ENCODE measurements at regions of chr5 and their contacts with region 1.

Region 1: GRCh38 chr5:61357745-61358144 is 25.7 kb downstream of the ZSWIM6 start:
- DNase-seq: no peak
- ATAC-seq: no peak
- H3K4me3 ChIP-seq: no peak overlapping the region
- H3K27ac ChIP-seq: no peak overlapping the region
- H3K4me1 ChIP-seq: no peaks in the 10 kb centered on the region; the same call in 1 of the 2 replicates
- H3K27me3 ChIP-seq: no peaks in the 10 kb centered on the region
- CTCF ChIP-seq: peak; percentile 39; the same call in 1 of the 2 replicates

Region 2: GRCh38 chr5:60870857-60871256 is 486.9 kb before region 1 on chr5:
- CTCF ChIA-PET with region 1: no interaction called
- POLR2A ChIA-PET with region 1: no interaction called
- in situ Hi-C with region 1: no loop called
- intact Hi-C with region 1: no loop called
- DNase-seq: no peak
- ATAC-seq: no peak
- H3K4me3 ChIP-seq: no peak overlapping the region
- H3K27ac ChIP-seq: no peak overlapping the region
- H3K4me1 ChIP-seq: no peaks in the 10 kb centered on the region
- H3K27me3 ChIP-seq: no peaks in the 10 kb centered on the region
- CTCF ChIP-seq: no peak

Region 3: DNA sequence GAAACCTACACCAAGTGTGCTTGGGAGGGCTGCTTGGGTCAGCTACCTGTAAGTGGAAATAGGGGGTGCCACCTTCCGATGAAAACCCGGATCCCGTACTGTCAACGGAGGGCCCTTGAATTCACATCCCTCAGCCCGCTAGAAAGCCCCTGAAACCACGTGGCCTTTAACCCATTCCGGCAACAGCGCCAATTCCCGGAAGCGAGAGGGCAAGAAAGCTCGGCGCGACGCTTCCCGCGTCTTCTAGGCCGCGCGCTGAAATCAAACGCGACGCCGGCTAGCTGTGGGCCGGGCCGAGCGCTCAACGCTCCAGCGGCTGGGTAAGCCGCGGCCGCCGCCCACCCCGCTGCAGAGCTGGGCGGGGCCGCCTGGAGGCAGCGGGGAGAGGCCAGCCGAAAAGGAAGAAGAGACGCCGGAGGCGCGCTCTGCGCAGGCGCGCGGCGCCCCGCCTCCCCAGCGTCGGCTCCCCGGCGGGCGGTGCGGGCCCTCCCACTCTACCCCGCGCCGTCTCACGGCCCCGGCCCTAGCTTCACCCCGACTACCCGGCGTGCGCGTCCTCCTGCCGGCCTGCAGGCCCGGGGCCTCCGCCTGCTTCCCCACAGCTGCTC is 948.1 kb after region 1 on chr5 and contains the start of gene KIF2A:
- CTCF ChIA-PET with region 1: no interaction called
- POLR2A ChIA-PET with region 1: interaction called, 10 read pairs
- in situ Hi-C with region 1: no loop called
- intact Hi-C with region 1: no loop called
- DNase-seq: peak; percentile 47
- ATAC-seq: peak; percentile 98
- H3K4me3 ChIP-seq: peak within 1 kb of the TSS; percentile 89 to 94
- H3K27ac ChIP-seq: peak within 1 kb of the TSS; percentile 90
- H3K4me1 ChIP-seq: peaks cover 13% of the 10 kb centered on the region
- H3K27me3 ChIP-seq: no peaks in the 10 kb centered on the region
- CTCF ChIP-seq: no peak
- total RNA-seq, gene KIF2A: 58.9 TPM